ENCODE measurements at regions of chr4 and their contacts with region 1.

Region 1: GRCh38 chr4:145618210-145618931 is 814 bp upstream of the MMAA start:
- H3K4me3 ChIP-seq: peak overlapping the region; percentile 90
- H3K27ac ChIP-seq: peak overlapping the region; percentile 80
- H3K4me1 ChIP-seq: no peaks in the 10 kb centered on the region
- CTCF ChIP-seq: no peak

Region 2: DNA sequence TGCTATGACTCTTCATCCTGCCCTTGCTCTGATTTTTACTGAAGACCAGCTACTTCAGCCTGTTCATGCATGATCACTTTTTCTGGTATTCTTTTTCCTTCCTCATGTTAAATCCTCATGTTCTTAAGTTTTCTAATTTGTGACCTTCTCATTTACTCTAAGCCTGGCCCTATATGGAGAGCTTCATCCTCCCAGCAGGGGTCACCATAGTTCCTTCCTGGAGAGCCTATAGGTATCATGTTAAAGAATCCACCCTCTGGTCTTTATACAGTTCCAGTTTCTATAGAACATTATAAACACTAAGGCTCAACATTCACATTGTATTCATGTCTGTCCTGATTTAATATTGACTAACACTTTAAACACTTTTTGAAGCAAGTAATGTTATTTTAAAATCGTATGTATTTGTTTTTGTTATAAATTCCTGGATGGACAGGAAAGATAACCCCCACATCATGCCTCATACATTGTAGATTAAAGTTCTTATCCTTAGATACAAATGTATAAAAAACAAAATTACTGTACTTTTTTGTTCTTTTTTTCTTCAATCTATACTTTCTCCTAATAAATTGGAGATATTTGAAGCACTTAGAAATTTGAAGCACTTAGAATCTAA is 384.2 kb before region 1 on chr4:
- CTCF ChIA-PET with region 1: interaction called, 10 read pairs
- POLR2A ChIA-PET with region 1: no interaction called
- H3K4me3 ChIP-seq: no peak overlapping the region
- H3K27ac ChIP-seq: no peak overlapping the region
- H3K4me1 ChIP-seq: no peaks in the 10 kb centered on the region
- CTCF ChIP-seq: 0 out of 2 replicates have a peak, but pooled peaks have one; percentile 18

Region 3: GRCh38 chr4:145541346-145541745 is 77.0 kb before region 1 on chr4:
- CTCF ChIA-PET with region 1: no interaction called
- POLR2A ChIA-PET with region 1: no interaction called
- H3K4me3 ChIP-seq: no peak overlapping the region
- H3K27ac ChIP-seq: no peak overlapping the region
- H3K4me1 ChIP-seq: peaks cover 7% of the 10 kb centered on the region; the same call in 1 of the 2 replicates
- CTCF ChIP-seq: no peak